ENCODE measurements at regions of chr2 and their contacts with region 1.

Region 1: DNA sequence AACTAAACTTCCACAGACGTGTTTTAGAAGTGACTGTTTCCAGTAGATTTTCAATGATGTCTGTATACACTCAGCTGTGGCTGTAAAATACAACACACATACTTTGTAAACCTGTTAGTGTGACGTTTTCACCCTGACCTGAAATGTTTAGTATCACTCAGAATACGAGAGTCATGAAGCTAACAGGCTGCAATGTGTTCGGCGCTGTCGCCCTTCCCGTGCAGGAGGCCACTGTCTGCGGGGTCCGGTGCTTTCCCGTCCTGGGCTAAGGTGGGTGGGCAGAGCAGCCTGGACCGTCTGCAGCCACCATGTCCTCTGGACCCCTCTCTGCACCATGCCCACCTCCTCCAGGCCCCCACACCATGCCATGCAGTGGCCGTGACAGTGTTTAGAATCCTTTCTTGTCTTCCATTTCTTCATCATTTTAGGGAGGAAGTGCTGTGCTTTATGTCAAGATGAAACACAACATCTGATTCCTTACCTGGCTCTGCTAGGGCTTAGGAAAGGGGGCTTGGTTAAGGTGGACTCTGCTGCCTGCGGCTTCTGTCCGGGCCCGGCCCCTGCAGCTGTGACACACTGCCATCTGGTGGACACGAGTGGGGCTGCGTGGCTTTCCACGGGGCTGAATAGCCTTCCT is 53.8 kb upstream of the RBM44 start:
- DNase-seq: peak; percentile 59 to 90 (median 79)
- ATAC-seq: peak; percentile 78
- H3K4me3 ChIP-seq: no peak overlapping the region
- H3K4me3 Mint-ChIP-seq: no peak overlapping the region
- H3K27ac ChIP-seq: peak overlapping the region in 1 of 2 experiments; percentile 37
- H3K27ac Mint-ChIP-seq: peak overlapping the region; percentile 76
- H3K4me1 ChIP-seq: peaks cover 6% of the 10 kb centered on the region
- H3K4me1 Mint-ChIP-seq: peaks cover 41% of the 10 kb centered on the region
- H3K27me3 ChIP-seq: no peaks in the 10 kb centered on the region
- H3K27me3 Mint-ChIP-seq: no peaks in the 10 kb centered on the region
- CTCF ChIP-seq: peak; percentile 98

Region 2: GRCh38 chr2:237512774-237513466 is 231.8 kb before region 1 on chr2:
- CTCF ChIA-PET with region 1: interaction called, 29 read pairs
- POLR2A ChIA-PET with region 1: interaction called, 3 read pairs
- intact Hi-C with region 1: loop called (anchors 1 kb)
- DNase-seq: peak; percentile 48 to 85 (median 77)
- ATAC-seq: peak; percentile 86
- H3K4me3 ChIP-seq: no peak overlapping the region
- H3K4me3 Mint-ChIP-seq: no peak overlapping the region
- H3K27ac ChIP-seq: no peak overlapping the region
- H3K27ac Mint-ChIP-seq: no peak overlapping the region
- H3K4me1 ChIP-seq: no peaks in the 10 kb centered on the region
- H3K4me1 Mint-ChIP-seq: no peaks in the 10 kb centered on the region
- H3K27me3 ChIP-seq: no peaks in the 10 kb centered on the region
- H3K27me3 Mint-ChIP-seq: peaks cover 3% of the 10 kb centered on the region
- CTCF ChIP-seq: peak; percentile 83

Region 3: GRCh38 chr2:237581751-237582746 is 162.7 kb before region 1 on chr2:
- CTCF ChIA-PET with region 1: interaction called, 62 read pairs
- POLR2A ChIA-PET with region 1: no interaction called
- intact Hi-C with region 1: loop called (anchors 1 kb)
- DNase-seq: peak in 6 of 9 experiments; percentile 13 to 80 (median 54)
- ATAC-seq: peak; percentile 95
- H3K4me3 ChIP-seq: no peak overlapping the region
- H3K4me3 Mint-ChIP-seq: no peak overlapping the region
- H3K27ac ChIP-seq: no peak overlapping the region
- H3K27ac Mint-ChIP-seq: no peak overlapping the region
- H3K4me1 ChIP-seq: no peaks in the 10 kb centered on the region
- H3K4me1 Mint-ChIP-seq: peaks cover 3% of the 10 kb centered on the region
- H3K27me3 ChIP-seq: no peaks in the 10 kb centered on the region
- H3K27me3 Mint-ChIP-seq: no peaks in the 10 kb centered on the region
- CTCF ChIP-seq: peak; percentile 47

Region 4: GRCh38 chr2:237633061-237633561 is 111.6 kb before region 1 on chr2:
- CTCF ChIA-PET with region 1: interaction called, 10 read pairs
- POLR2A ChIA-PET with region 1: no interaction called
- intact Hi-C with region 1: no loop called
- DNase-seq: no peak
- ATAC-seq: no peak
- H3K4me3 ChIP-seq: no peak overlapping the region
- H3K4me3 Mint-ChIP-seq: no peak overlapping the region
- H3K27ac ChIP-seq: no peak overlapping the region
- H3K27ac Mint-ChIP-seq: no peak overlapping the region
- H3K4me1 ChIP-seq: peaks cover 11% of the 10 kb centered on the region
- H3K4me1 Mint-ChIP-seq: peaks cover 22% of the 10 kb centered on the region
- H3K27me3 ChIP-seq: no peaks in the 10 kb centered on the region
- H3K27me3 Mint-ChIP-seq: peaks cover 21% of the 10 kb centered on the region
- CTCF ChIP-seq: no peak

Region 5: GRCh38 chr2:237691908-237692600 is 52.7 kb before region 1 on chr2:
- CTCF ChIA-PET with region 1: interaction called, 33 read pairs
- POLR2A ChIA-PET with region 1: interaction called, 3 read pairs
- intact Hi-C with region 1: loop called in 1 of 2 experiments (anchors 1 kb)
- DNase-seq: peak; percentile 91 to 97 (median 95)
- ATAC-seq: peak; percentile 58
- H3K4me3 ChIP-seq: peak overlapping the region; percentile 80 to 85
- H3K4me3 Mint-ChIP-seq: peak overlapping the region; percentile 81
- H3K27ac ChIP-seq: peak overlapping the region; percentile 81 to 90
- H3K27ac Mint-ChIP-seq: peak overlapping the region; percentile 89
- H3K4me1 ChIP-seq: peaks cover 75% of the 10 kb centered on the region
- H3K4me1 Mint-ChIP-seq: peaks cover 75% of the 10 kb centered on the region
- H3K27me3 ChIP-seq: no peaks in the 10 kb centered on the region
- H3K27me3 Mint-ChIP-seq: no peaks in the 10 kb centered on the region
- CTCF ChIP-seq: no peak

Region 6: DNA sequence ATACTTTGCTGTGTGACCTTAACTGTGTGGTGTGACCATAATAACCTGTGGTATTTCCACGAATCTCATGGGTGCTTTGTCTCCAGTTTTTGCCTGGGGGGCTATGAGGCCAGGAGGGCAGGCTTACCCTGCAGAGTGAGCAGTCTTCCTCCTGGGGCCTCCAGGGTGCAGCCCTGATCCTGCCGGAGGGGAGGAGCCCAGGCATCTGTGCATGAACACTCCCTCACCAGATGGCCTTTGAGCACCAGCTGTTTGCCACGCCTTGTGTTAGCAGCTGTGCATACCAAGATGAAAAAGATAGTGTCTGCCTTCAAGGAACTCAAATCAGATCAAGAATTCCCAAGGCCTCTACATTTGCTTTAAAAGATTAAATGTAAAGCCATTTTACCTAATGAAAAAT is 21.1 kb before region 1 on chr2:
- CTCF ChIA-PET with region 1: interaction called, 16 read pairs
- POLR2A ChIA-PET with region 1: no interaction called
- intact Hi-C with region 1: no loop called
- DNase-seq: no peak
- ATAC-seq: peak; percentile 59
- H3K4me3 ChIP-seq: no peak overlapping the region
- H3K4me3 Mint-ChIP-seq: no peak overlapping the region
- H3K27ac ChIP-seq: no peak overlapping the region
- H3K27ac Mint-ChIP-seq: no peak overlapping the region
- H3K4me1 ChIP-seq: peaks cover 9% of the 10 kb centered on the region
- H3K4me1 Mint-ChIP-seq: peaks cover 65% of the 10 kb centered on the region
- H3K27me3 ChIP-seq: no peaks in the 10 kb centered on the region
- H3K27me3 Mint-ChIP-seq: no peaks in the 10 kb centered on the region
- CTCF ChIP-seq: no peak

Region 7: DNA sequence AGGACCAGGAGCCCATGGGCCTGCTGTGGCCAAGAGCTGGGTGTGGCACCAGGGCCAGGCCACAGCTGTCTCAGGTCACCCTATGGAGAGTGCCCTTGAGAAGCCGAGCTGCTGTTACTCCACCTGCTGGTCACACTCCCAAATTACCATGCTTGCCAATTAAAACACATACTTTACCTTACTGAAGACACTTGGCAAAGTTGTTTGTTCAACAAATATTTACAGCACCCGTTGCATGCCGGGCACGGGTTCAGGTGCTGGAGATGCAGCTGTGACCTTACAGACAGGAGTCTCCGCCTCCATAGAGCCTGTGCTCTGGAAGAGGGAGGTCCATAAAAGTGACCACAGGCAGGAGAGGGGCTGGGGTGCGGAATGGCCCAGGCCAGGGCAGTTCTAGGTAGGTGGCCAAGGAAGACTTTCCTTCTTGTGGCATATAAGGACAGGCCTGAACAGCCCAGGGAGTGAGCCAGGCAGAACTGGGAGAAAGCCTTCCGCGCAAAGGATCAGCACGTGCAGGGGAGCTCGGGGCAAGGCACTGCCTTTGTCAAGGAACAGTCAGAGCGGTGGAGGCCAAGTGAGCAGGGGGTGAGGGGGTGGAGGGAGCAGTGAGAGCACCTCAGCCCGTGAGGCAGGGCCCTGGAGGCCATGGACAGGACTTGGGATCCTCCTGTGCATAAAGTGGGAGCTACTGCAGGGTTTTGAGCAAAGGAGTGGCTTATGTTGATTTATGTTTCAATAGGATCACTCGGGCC is 30.2 kb after region 1 on chr2:
- CTCF ChIA-PET with region 1: interaction called, 12 read pairs
- POLR2A ChIA-PET with region 1: interaction called, 4 read pairs
- intact Hi-C with region 1: no loop called
- DNase-seq: peak in 6 of 9 experiments; percentile 14 to 59 (median 46)
- ATAC-seq: peak; percentile 73
- H3K4me3 ChIP-seq: no peak overlapping the region
- H3K4me3 Mint-ChIP-seq: no peak overlapping the region
- H3K27ac ChIP-seq: no peak overlapping the region
- H3K27ac Mint-ChIP-seq: no peak overlapping the region
- H3K4me1 ChIP-seq: no peaks in the 10 kb centered on the region
- H3K4me1 Mint-ChIP-seq: no peaks in the 10 kb centered on the region
- H3K27me3 ChIP-seq: no peaks in the 10 kb centered on the region
- H3K27me3 Mint-ChIP-seq: no peaks in the 10 kb centered on the region
- CTCF ChIP-seq: peak; percentile 43

Region 8: DNA sequence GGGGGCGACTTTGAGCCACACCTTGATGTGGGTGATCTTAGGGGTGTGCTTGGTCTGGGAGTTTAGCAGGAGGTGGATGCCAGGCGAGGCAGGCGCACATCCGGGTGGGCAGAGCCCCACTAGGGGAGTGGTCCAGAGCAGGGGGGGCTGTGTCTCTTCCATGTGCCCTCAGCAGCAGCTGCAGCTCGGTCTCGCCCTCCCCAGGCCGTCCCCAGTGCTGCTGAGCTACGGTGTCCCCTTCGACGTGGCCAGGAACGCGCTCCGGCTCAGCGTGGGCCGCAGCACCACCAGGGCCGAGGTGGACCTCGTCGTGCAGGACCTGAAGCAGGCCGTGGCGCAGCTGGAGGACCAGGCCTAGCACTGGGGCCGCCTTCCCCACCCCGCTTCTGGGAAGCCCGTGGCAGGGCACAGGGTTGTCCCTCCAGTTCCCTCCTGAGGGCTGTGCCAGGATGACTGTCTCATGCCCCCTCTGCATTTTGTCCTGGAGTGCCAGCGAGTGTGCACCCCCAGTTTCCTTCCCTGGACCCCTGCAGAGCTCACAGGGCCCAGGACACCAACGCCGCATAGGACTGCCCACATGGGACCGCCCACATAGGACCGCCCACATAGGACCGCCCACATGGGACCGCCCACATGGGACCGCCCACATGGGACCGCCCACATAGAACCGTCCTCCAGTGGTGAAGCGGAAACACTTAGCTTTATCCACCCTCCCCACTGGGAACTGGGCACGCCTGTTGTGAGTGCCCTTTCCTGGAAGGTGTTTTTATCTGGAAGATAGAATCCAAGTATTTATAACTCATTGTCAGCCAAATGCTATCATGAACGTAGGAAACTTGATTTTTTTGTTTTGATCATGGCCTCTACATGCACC is 353.5 kb after region 1 on chr2:
- CTCF ChIA-PET with region 1: no interaction called
- POLR2A ChIA-PET with region 1: no interaction called
- intact Hi-C with region 1: no loop called
- DNase-seq: peak in 4 of 9 experiments; percentile 9 to 48 (median 36)
- ATAC-seq: no peak
- H3K4me3 ChIP-seq: no peak overlapping the region
- H3K4me3 Mint-ChIP-seq: no peak overlapping the region
- H3K27ac ChIP-seq: no peak overlapping the region
- H3K27ac Mint-ChIP-seq: no peak overlapping the region
- H3K4me1 ChIP-seq: no peaks in the 10 kb centered on the region
- H3K4me1 Mint-ChIP-seq: no peaks in the 10 kb centered on the region
- H3K27me3 ChIP-seq: no peaks in the 10 kb centered on the region
- H3K27me3 Mint-ChIP-seq: no peaks in the 10 kb centered on the region
- CTCF ChIP-seq: no peak

Measured in CD8-positive, alpha-beta T cell (primary cell).